ENCODE measurements at regions of chr4 and their contacts with region 1.

Region 1: GRCh38 chr4:20422398-20422797 is 170.7 kb downstream of the SLIT2 start:
- DNase-seq: peak; percentile 77
- H3K4me3 Mint-ChIP-seq: no peak overlapping the region
- H3K27ac Mint-ChIP-seq: no peak overlapping the region
- H3K4me1 Mint-ChIP-seq: peaks cover 5% of the 10 kb centered on the region
- H3K27me3 Mint-ChIP-seq: peaks cover 11% of the 10 kb centered on the region

Region 2: DNA sequence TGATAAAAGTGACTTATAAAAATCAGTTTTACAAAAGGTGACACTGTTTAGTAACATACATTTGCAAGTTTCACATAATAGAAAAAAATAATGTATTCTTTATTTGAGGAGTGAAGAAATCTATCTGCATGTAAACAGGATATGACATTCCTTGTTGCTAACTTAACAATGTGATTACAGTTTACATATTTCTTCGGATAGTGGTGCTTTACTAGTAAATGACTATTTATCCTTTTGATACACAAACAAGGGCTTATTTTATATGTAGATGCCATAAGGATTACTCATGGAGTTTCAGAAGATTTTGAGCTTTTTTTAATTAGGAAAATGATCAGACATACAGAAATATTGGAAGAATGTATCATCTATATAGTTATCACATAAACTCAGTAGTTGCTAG is 44.2 kb before region 1 on chr4:
- intact Hi-C with region 1: no loop called
- DNase-seq: no peak
- H3K4me3 Mint-ChIP-seq: no peak overlapping the region
- H3K27ac Mint-ChIP-seq: no peak overlapping the region
- H3K4me1 Mint-ChIP-seq: no peaks in the 10 kb centered on the region
- H3K27me3 Mint-ChIP-seq: no peaks in the 10 kb centered on the region

Region 3: DNA sequence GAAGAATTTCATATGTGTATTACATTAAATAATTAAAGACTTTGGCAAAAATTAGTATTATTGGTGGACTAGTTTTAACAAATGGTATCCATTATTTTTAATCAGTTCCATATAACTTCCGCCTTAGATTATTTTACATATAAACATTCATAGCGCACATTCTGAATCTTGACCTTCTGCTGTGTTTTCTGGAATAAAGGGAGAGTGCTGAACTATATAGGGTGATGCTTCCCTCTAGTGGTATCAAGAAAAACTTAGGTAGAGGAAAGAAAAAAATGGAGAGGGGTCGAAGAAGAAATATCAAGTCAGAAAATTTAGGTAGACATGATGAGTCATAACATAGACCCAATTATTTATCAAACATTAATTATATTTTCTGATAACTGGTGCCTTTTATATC is 122.2 kb after region 1 on chr4:
- intact Hi-C with region 1: loop called (anchors 10 kb)
- DNase-seq: peak; percentile 10
- H3K4me3 Mint-ChIP-seq: no peak overlapping the region
- H3K27ac Mint-ChIP-seq: no peak overlapping the region
- H3K4me1 Mint-ChIP-seq: no peaks in the 10 kb centered on the region
- H3K27me3 Mint-ChIP-seq: no peaks in the 10 kb centered on the region

Region 4: DNA sequence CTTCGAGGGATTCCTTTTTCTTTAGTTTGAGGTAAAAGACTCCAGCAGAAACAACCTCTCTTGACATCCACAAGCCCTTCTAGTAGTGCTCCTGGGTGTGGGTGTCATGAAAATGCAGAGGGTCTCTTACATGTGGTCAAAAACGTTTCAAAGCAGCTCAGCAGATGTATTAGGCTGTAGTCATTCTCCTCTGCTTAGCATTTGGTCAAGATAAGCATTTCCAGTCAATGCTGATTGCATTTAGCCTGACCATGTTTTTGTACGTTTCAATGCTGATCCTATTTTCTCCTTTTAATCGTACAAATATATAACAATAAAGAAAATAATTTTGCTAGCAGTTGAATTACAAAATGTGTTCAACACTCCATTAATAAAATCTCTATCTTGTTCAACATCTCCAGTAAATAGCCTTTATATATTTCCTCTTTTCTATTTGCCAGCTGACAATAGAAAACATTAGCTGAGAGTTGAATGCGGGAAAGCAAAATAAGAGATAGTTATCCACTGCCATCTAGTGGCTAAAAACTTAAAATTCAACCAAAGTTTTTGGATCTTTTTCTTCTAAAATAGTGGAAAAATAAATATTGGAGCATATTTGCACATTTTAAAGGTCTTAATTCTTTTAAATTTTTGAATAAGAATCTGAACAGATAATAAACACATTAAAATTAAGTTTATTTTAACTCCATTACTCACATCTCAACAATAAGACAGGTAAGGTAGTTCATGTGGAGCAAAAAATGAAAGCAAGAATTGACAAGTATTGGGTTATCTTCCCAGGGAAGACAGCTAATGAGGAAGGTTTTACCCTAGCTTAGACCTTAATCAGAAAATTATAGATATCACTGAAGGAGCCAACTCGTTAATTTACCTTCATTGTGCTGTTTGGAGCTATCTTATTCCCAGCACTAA is 262.7 kb after region 1 on chr4:
- intact Hi-C with region 1: loop called (anchors 1 kb)
- DNase-seq: no peak
- H3K4me3 Mint-ChIP-seq: no peak overlapping the region
- H3K27ac Mint-ChIP-seq: no peak overlapping the region
- H3K4me1 Mint-ChIP-seq: no peaks in the 10 kb centered on the region
- H3K27me3 Mint-ChIP-seq: peaks cover 13% of the 10 kb centered on the region

Region 5: GRCh38 chr4:20700007-20700761 is 277.8 kb after region 1 on chr4 and contains the start of gene PACRGL:
- intact Hi-C with region 1: loop called (anchors 5 kb)
- DNase-seq: peak; percentile 97
- H3K4me3 Mint-ChIP-seq: peak within 1 kb of the TSS; percentile 95
- H3K27ac Mint-ChIP-seq: peak within 1 kb of the TSS; percentile 96
- H3K4me1 Mint-ChIP-seq: peaks cover 23% of the 10 kb centered on the region
- H3K27me3 Mint-ChIP-seq: no peaks in the 10 kb centered on the region
- total RNA-seq, gene PACRGL: 20.1 and 22.1 TPM in 2 replicates

Region 6: DNA sequence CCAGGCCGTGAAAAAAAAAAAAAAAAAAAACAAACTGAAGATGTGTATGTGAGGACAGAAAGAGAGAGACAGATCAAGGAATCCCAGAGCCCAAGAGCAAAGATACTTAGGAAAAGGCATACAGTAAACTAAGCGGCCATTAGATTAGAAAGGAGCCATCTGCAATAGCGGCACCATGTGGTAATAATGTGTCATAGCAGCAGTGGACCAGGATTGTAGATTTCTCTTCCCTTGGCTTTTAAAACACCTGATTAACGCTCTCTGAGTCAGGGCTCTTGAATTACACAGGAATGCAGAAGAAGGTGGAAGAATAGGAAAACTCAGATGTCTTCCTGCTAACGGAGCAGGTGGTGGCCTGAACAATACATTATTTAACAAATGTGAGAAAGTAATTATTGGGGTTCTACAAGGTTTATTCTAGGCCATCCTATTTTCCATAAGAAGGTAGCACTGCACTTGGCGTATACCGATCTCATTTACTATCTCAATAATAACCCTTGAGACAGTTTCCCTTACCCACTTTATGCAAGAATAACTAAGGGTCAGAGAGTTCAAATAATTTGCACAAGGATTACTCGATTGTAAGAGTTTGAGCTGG is 1343.5 kb after region 1 on chr4:
- intact Hi-C with region 1: loop called (anchors 5 kb)
- DNase-seq: peak; percentile 73
- H3K4me3 Mint-ChIP-seq: no peak overlapping the region
- H3K27ac Mint-ChIP-seq: no peak overlapping the region
- H3K4me1 Mint-ChIP-seq: peaks cover 3% of the 10 kb centered on the region
- H3K27me3 Mint-ChIP-seq: peaks cover 3% of the 10 kb centered on the region